ENCODE measurements at regions of chrX and their contacts with region 1.

Region 1: DNA sequence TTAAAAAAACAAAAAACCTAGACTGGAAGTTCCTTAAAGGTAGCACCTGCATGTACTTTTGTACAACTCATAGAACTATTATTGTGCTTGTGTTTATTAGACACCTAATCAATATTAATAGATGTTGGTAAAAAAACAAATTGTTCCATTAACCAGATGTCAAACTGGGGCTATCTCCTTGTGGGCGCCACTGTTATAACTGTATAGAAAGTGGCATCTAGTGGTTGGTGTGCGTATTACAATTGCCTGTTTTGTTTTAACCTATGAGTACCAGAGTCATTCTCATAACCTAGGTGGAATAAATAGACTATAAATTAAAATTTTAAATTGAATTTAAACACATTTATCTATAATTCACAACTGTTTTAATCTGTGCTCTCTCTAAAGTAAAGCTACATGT is 97.4 kb downstream of the COL4A5 start:
- DNase-seq: no peak
- ATAC-seq: no peak
- H3K4me3 ChIP-seq: no peak overlapping the region
- H3K27ac ChIP-seq: no peak overlapping the region
- H3K4me1 ChIP-seq: peaks cover 0 to 1% of the 10 kb centered on the region in 2 donors
- H3K27me3 ChIP-seq: no peaks in the 10 kb centered on the region

Region 2: DNA sequence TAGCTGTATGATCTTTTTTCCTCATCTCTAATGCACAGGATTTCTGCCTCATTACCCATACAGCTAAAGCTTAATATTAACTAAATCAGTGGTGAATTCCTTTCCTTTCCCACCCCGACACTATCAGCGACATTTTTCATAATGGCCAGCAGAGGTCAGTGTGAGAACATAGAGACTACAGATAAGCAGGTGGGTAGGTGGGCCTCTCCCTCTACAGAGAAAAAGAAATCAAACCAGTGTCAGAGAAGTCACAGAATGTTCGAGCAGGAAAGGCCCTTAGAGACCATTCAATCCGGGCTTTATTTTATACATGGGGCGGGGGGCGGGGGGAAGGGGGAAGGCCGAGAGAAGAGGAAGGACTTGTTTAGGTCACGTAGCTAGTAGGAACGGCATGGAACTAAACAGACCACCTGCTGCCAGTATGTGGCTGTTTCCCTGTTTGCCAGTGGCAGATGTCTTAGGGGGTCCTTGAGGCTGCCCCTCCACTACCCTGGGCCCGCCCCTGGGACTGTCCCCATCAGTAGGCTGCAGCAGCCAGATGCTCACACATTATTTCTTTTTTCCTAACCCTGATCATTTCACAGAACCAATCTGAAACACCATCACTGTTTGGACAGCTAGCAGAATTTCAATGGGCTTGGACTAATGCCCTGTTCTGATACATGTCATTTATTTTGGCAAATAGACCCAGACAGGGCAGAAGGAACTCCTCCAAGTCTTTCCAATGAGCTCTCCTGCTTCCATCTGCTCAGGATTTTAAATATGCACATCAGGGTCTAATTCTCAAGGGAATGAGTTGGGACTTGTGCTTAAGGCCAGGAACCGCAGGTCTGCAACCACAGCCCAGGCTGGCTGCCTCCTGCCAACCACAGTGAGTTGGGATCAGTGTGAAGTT is 312.0 kb before region 1 on chrX:
- intact Hi-C with region 1: loop called (anchors 5 to 10 kb)
- DNase-seq: no peak
- ATAC-seq: peak; percentile 36
- H3K4me3 ChIP-seq: no peak overlapping the region
- H3K27ac ChIP-seq: no peak overlapping the region
- H3K4me1 ChIP-seq: peaks cover 0 to 2% of the 10 kb centered on the region in 2 donors
- H3K27me3 ChIP-seq: no peaks in the 10 kb centered on the region